ENCODE measurements at regions of chr5 and their contacts with region 1.

Region 1: DNA sequence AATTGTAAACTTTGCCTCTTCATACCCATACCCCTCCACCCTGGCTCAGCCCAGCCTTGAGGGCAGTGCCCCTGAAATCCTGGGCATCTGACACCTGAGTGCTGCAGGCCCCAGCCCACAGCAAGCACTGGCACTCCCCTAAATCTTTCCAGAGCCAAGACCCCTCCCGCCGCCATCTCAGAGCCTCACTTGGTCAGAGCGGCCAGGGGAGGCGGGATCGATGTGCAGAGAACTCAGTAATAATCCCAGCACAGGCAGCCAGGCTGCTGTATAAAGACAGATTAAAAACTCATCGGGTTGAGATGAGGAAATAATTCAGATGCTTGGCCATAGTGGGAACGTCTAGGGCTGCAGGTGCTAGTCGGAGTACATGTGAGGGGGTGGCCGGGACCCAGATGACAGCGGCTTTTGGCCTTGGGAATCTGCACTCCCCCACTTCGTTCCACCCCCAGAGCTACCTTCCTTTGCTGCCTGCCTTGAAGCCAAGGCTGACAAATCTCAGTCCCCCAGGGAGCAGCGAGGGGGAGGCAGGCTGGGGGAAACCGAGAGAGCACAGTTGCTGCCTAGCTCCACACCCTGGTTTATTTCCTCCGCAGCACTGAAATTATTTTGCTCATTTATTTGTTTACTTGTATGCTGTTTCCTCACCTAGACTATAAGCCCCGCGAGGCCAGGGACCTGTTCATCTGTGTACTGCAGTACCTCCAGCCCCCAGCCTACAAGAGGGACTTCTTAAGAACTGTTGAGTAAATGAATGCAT is 19.5 kb upstream of the ARAP3 start:
- DNase-seq: peak; percentile 36
- H3K4me3 Mint-ChIP-seq: peak overlapping the region; percentile 67
- H3K27ac Mint-ChIP-seq: no peak overlapping the region
- H3K4me1 Mint-ChIP-seq: peaks cover 15% of the 10 kb centered on the region
- H3K27me3 Mint-ChIP-seq: peaks cover 21% of the 10 kb centered on the region

Region 2: GRCh38 chr5:141149812-141150211 is 551.7 kb before region 1 on chr5 and contains the start of gene PCDHB6:
- CTCF ChIA-PET with region 1: no interaction called
- intact Hi-C with region 1: no loop called
- DNase-seq: peak; percentile 21
- H3K4me3 Mint-ChIP-seq: no peak within 1 kb of the TSS
- H3K27ac Mint-ChIP-seq: no peak within 1 kb of the TSS
- H3K4me1 Mint-ChIP-seq: peaks cover 4% of the 10 kb centered on the region
- H3K27me3 Mint-ChIP-seq: peaks cover 37% of the 10 kb centered on the region
- total RNA-seq, gene PCDHB6: not detected

Region 3: GRCh38 chr5:141811287-141812155 is 110.0 kb after region 1 on chr5:
- CTCF ChIA-PET with region 1: interaction called, 13 read pairs
- intact Hi-C with region 1: loop called (anchors 1 kb)
- DNase-seq: peak; percentile 25
- H3K4me3 Mint-ChIP-seq: no peak overlapping the region
- H3K27ac Mint-ChIP-seq: no peak overlapping the region
- H3K4me1 Mint-ChIP-seq: no peaks in the 10 kb centered on the region
- H3K27me3 Mint-ChIP-seq: peaks cover 44% of the 10 kb centered on the region

Region 4: DNA sequence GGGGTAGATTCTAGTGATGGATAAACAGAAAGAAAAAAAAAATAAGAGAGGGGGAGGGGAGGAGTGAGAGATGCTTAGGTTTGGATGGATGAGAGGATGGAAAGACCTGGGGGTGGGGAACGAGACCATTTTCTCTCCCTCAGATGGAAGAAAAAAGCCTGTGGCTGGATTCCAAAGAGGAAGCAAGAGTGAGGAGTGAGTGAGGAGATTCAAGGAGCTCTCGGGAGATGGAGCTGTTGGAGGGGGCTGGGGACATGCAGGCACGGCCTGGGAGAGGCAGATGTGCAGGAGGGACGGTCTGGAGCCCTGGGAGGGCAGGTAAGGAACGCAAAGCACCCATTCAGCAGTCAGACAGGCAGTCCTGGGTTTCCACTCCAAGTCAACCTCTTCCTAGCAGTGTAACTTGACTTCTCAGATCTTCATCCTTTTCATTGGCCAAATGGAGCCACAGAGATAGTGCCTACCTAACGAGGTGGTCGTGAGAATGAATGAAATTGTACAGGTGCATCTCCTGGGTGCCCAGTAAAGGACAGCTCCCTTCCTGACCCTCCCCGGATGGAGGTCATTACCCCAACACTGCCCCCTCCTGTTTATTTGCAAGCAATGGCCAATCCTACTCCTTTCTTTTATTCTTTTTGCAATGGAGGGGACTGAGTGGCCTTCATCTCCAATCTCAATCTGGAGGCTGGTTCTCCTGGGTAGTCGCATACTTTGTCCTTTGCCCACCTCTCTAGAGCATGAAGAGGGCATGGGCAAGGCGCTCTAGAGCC is 124.4 kb after region 1 on chr5:
- CTCF ChIA-PET with region 1: interaction called, 5 read pairs
- intact Hi-C with region 1: loop called (anchors 1 kb)
- DNase-seq: peak; percentile 23
- H3K4me3 Mint-ChIP-seq: no peak overlapping the region
- H3K27ac Mint-ChIP-seq: no peak overlapping the region
- H3K4me1 Mint-ChIP-seq: no peaks in the 10 kb centered on the region
- H3K27me3 Mint-ChIP-seq: no peaks in the 10 kb centered on the region